OCI-LY7 (cell line): ENCODE measurements at regions of chr14 and their contacts with region 1.

Region 1: DNA sequence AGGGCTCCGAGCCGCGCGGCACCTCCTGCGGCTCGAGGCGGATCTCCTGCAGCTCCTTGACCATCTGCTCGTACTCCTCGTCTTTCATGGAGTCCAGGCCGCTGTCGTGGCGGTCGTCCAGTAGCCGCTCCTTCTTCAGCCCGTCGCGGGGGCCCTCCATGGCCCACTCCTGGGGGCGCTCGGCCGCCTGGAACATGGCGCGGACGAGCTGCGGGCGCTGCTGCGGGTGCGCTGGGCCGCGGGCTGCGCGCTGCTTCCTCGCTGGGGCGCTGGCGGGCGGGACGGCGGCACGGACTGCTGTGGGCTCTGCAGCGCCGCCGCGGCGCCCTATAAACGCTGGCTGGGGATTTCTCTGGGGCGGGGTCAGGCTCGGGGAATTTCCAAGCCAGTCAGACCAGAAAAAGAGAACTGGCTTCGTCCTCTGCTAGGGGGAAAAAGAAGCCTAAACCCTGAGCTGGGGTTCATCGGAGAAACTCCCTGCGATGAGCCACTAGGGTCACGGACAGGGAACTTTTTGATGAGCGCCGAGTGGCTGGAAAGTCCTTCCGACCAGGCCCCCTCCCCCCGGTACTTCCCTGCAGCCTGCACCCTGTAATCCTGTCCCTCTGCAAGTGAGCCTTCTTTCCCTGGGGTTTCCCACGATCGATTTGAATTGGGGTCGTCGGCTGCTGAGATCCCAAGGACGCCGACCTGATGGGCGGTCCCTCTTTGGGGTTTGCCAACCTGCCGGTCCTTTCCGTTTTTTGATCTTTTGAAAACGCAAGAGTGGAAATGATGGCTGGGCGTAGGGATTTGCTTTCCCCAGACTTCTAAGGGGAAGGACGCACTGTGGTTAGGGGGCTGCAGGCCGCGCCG is at the start of gene NFKBIA:
- DNase-seq: peak; percentile 91
- H3K4me3 ChIP-seq: peak within 1 kb of the TSS; percentile 93
- H3K27ac ChIP-seq: peak within 1 kb of the TSS; percentile 79
- H3K4me1 ChIP-seq: peaks cover 47% of the 10 kb centered on the region
- CTCF ChIP-seq: peak; percentile 73
- total RNA-seq, gene NFKBIA: 100 and 109 TPM in 2 replicates

Region 2: DNA sequence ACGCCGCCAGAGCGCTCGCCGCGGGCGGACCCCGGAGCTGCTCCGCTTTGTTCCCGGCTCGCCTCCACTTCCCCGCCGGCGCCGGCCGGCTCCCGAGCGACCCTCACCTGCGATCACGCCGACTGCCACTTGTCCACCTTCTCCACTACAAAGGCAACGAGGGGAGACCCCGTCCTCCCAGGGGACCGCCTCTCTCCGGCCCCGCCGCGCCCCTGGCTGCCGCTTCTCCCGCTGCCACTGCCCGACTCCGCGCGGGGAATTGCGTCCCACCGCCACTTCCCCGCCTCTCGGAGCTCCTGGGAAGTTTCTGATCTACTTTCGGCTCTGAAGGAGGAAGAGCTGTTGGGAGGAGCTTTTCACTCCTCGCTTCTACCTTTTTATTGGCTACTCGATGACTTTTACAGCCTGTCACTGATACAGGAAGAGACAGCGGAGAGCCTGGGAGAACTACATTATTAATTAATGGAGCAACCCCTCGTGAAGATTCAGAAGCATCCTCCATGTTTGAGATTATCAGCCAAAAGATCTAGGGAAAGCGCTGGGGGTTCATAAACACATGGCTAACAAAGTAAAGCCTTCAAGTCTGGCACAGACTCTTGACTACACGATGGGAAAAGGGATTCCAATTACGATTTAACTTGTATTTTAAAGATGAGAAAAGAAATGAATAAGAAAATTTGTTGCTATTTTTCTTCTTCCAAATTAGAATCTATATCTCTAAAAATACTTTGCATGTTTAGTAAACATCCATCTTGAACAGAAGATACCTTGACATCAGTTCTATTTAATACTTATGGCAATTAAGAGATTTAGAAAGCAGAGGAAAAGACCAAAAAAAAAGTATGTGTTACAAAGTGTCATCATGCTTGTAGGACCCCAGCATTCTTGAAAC is 529.4 kb before region 1 on chr14 and contains the start of gene BAZ1A:
- CTCF ChIA-PET with region 1: no interaction called
- POLR2A ChIA-PET with region 1: no interaction called
- intact Hi-C with region 1: loop called (anchors 5 kb)
- DNase-seq: peak; percentile 82
- H3K4me3 ChIP-seq: peak within 1 kb of the TSS; percentile 99
- H3K27ac ChIP-seq: peak within 1 kb of the TSS; percentile 95
- H3K4me1 ChIP-seq: peaks cover 22% of the 10 kb centered on the region
- CTCF ChIP-seq: no peak
- total RNA-seq, gene BAZ1A: 39.6 and 42.2 TPM in 2 replicates

Region 3: GRCh38 chr14:35046048-35046741 is 358.5 kb before region 1 on chr14 and contains the start of gene FAM177A1:
- CTCF ChIA-PET with region 1: no interaction called
- POLR2A ChIA-PET with region 1: interaction called, 3 read pairs
- intact Hi-C with region 1: loop called (anchors 5 kb)
- DNase-seq: peak; percentile 97
- H3K4me3 ChIP-seq: peak within 1 kb of the TSS; percentile 89
- H3K27ac ChIP-seq: peak within 1 kb of the TSS; percentile 57
- H3K4me1 ChIP-seq: peaks cover 18% of the 10 kb centered on the region
- CTCF ChIP-seq: no peak
- total RNA-seq, gene FAM177A1: 17.3 and 19.0 TPM in 2 replicates

Region 4: DNA sequence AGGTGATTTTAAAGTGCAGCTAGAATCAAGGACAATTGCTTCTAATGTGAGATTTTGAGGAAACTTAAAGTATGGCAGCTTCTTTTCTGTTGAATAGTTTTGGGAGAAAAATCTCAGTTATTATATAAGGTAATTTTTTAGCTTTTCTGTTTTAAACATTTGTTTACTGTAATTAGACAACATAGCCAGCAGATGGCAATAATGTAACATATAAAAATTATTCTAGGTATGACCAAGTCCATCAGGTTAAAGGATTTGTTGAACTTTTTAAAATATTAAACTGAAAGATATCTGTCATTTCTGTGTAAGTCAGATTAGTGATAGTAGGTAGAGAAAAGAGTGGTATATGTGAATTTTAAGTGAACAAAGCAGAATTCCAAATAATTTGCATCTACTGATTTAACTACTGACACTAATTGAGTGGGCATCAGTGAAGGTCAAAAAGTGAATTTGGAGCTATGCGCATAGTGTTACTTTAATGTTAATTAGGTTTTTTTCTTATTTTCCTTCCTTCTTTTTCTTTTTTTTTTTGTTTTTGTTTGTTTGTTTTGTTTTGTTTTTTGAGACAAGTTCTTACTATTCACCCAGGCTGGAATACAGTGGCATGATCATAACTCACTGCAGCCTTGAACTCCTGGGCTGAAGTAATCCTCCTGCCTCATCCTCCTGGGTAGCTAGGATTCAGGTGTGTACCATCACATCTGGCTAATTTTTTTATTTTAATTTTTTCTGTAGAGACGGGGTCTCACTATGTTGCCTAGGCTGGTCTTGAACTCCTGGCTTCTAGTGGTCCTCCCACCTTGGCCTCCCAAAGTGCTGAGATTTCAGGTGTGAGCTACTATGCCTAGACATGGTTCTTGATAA is 263.7 kb before region 1 on chr14:
- CTCF ChIA-PET with region 1: interaction called, 3 read pairs
- POLR2A ChIA-PET with region 1: interaction called, 4 read pairs
- intact Hi-C with region 1: loop called (anchors 1 kb)
- DNase-seq: peak; percentile 59
- H3K4me3 ChIP-seq: no peak overlapping the region
- H3K27ac ChIP-seq: no peak overlapping the region
- H3K4me1 ChIP-seq: no peaks in the 10 kb centered on the region
- CTCF ChIP-seq: peak; percentile 88

Region 5: GRCh38 chr14:35285168-35286002 is 119.3 kb before region 1 on chr14:
- CTCF ChIA-PET with region 1: no interaction called
- POLR2A ChIA-PET with region 1: interaction called, 37 read pairs
- intact Hi-C with region 1: loop called (anchors 2 kb)
- DNase-seq: peak; percentile 81
- H3K4me3 ChIP-seq: peak overlapping the region; percentile 59
- H3K27ac ChIP-seq: peak overlapping the region; percentile 99
- H3K4me1 ChIP-seq: peaks cover 81% of the 10 kb centered on the region
- CTCF ChIP-seq: no peak

Region 6: DNA sequence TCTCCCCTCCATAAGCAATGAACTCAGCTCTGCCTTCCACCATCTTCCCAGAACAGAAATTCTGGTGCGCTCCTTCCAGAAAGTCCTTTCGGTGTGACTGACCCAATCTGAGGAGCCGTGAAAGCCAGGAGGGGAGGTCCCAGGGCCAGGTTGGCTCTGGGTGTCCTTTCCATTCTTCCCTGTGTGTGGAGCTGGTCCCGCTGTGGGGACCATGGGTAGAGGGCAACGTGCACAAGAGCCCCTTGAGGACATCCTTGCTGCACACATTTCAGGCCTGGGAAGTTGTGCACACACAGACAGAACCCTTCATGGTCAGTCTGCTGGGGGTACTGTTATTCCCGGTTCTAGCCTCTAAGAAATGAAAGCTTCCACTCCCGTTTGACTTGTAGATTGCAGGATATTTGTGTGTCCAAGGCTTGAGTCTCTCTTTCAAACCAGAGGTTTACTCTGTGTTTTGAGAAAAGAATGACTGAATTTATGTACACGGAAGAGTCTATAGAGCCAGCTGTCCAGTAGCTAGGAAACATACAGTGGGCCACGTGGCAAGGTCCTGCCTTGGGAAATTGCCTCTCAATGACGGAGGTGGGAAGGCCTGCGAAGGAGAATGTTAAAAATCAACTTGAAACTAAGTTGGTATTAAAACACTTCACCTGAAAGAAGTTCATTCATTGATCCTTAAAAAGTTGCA is 10.2 kb before region 1 on chr14:
- CTCF ChIA-PET with region 1: interaction called, 3 read pairs
- POLR2A ChIA-PET with region 1: interaction called, 11 read pairs
- intact Hi-C with region 1: no loop called
- DNase-seq: no peak
- H3K4me3 ChIP-seq: no peak overlapping the region
- H3K27ac ChIP-seq: no peak overlapping the region
- H3K4me1 ChIP-seq: peaks cover 19% of the 10 kb centered on the region
- CTCF ChIP-seq: no peak